Activated CD4-positive, alpha-beta T cell treated with anti-CD3 and anti-CD28 coated beads, Interleukin-2, amount 10 ng/mL, durations not matched to agents 7 days and 5 days (primary cell): ENCODE measurements at regions of chr10 and their contacts with region 1.

Region 1: DNA sequence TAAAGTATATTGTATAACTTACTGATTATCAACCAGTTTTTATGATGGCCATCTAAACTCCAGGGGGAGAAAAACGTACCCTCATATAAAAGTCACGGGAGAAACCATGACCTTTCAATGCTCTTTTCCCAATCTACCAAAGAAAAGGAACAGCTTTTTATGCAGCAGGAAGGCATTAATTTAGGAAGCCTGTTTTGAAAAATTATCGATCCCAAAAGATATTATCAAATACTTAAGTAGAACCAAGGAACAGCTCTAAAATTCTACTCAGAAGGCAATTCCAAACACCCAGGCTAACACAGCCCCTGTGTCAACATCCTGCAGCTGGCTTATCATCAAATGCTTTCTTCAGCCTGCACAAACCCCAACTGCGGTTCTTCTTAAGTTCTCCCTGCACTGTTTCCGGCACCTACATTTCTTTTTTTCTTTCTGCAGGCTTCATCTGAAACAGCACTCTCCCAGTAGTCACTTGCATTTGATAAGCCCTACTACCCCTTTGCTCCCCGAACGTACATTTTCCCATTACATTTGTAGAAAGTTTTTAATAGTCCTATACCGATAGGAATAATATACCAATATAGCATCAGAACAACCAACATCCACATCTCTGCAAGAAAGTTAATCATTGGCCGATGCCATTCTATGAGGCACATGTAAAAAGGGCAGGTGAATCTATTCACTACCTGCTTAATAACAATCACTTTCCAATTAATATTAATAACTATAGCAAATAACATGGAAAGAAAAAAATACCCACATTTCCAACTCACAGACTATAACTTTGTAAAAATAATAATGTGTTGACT is 47.9 kb downstream of the PIP4K2A start:
- DNase-seq: peak; percentile 82
- H3K4me3 Mint-ChIP-seq: peak overlapping the region; percentile 73
- H3K27ac Mint-ChIP-seq: peak overlapping the region; percentile 91
- H3K4me1 Mint-ChIP-seq: peaks cover 83% of the 10 kb centered on the region
- H3K27me3 Mint-ChIP-seq: no peaks in the 10 kb centered on the region

Region 2: GRCh38 chr10:22655311-22655981 is 11.0 kb before region 1 on chr10:
- CTCF ChIA-PET with region 1: interaction called, 12 read pairs
- POLR2A ChIA-PET with region 1: no interaction called
- DNase-seq: peak; percentile 64
- H3K4me3 Mint-ChIP-seq: peak overlapping the region; percentile 55
- H3K27ac Mint-ChIP-seq: peak overlapping the region; percentile 88
- H3K4me1 Mint-ChIP-seq: peaks cover 96% of the 10 kb centered on the region
- H3K27me3 Mint-ChIP-seq: no peaks in the 10 kb centered on the region